Heart left ventricle (tissue), 16 donors: ENCODE measurements at regions of chr12 and their contacts with region 1.

Region 1: GRCh38 chr12:120086801-120087621 is 29.5 kb downstream of the RAB35 start:
- DNase-seq: peak; percentile 98 to 99 (median 98)
- ATAC-seq: peak; percentile 95 to 99 (median 98)
- H3K4me3 ChIP-seq: peak overlapping the region in 11 of 12 donors; percentile 34 to 58 (median 46)
- H3K27ac ChIP-seq: peak overlapping the region in 11 of 12 donors; percentile 45 to 80 (median 72)
- H3K4me1 ChIP-seq: peaks cover 0 to 22% (median 8%) of the 10 kb centered on the region in 12 donors
- H3K27me3 ChIP-seq: no peaks in the 10 kb centered on the region
- CTCF ChIP-seq: peak; percentile 94 to 100 (median 98)
- POLR2A ChIP-seq: peak in 1 of 2 donors; percentile 48

Region 2: GRCh38 chr12:119989669-119990389 is 97.2 kb before region 1 on chr12:
- intact Hi-C with region 1: loop called in 1 of 10 experiments (anchors 5 kb)
- DNase-seq: peak; percentile 80 to 88 (median 83)
- ATAC-seq: peak; percentile 82 to 97 (median 91)
- H3K4me3 ChIP-seq: peak overlapping the region in 10 of 12 donors; percentile 42 to 68 (median 58)
- H3K27ac ChIP-seq: no peak overlapping the region
- H3K4me1 ChIP-seq: peaks cover 0 to 20% (median 11%) of the 10 kb centered on the region in 12 donors
- H3K27me3 ChIP-seq: peaks cover 0 to 77% (median 35%) of the 10 kb centered on the region in 9 donors
- CTCF ChIP-seq: no peak
- POLR2A ChIP-seq: no peak

Region 3: GRCh38 chr12:120067084-120067869 is 19.7 kb before region 1 on chr12:
- intact Hi-C with region 1: no loop called
- DNase-seq: no peak
- ATAC-seq: peak in 2 of 4 donors; percentile 38 to 75
- H3K4me3 ChIP-seq: no peak overlapping the region
- H3K27ac ChIP-seq: no peak overlapping the region
- H3K4me1 ChIP-seq: peaks cover 0 to 9% (median 0%) of the 10 kb centered on the region in 12 donors
- H3K27me3 ChIP-seq: peaks cover 0 to 8% (median 0%) of the 10 kb centered on the region in 9 donors
- CTCF ChIP-seq: no peak
- POLR2A ChIP-seq: no peak

Region 4: GRCh38 chr12:120167529-120168095 is 80.6 kb after region 1 on chr12:
- intact Hi-C with region 1: no loop called
- DNase-seq: no peak
- ATAC-seq: no peak
- H3K4me3 ChIP-seq: no peak overlapping the region
- H3K27ac ChIP-seq: no peak overlapping the region
- H3K4me1 ChIP-seq: no peaks in the 10 kb centered on the region
- H3K27me3 ChIP-seq: no peaks in the 10 kb centered on the region
- CTCF ChIP-seq: no peak
- POLR2A ChIP-seq: no peak

Region 5: GRCh38 chr12:120799243-120800045 is 712.4 kb after region 1 on chr12:
- intact Hi-C with region 1: no loop called
- DNase-seq: no peak
- ATAC-seq: no peak
- H3K4me3 ChIP-seq: no peak overlapping the region
- H3K27ac ChIP-seq: no peak overlapping the region
- H3K4me1 ChIP-seq: peaks cover 0 to 18% (median 1%) of the 10 kb centered on the region in 12 donors
- H3K27me3 ChIP-seq: no peaks in the 10 kb centered on the region
- CTCF ChIP-seq: no peak
- POLR2A ChIP-seq: no peak